Aorta (tissue), 5 donors: ENCODE measurements at regions of chr12 and their contacts with region 1.

Region 1: GRCh38 chr12:118103604-118104382 is at the start of gene VSIG10:
- DNase-seq: peak; percentile 79 to 88
- ATAC-seq: peak; percentile 94
- H3K4me3 ChIP-seq: peak within 1 kb of the TSS; percentile 70 to 80
- H3K27ac ChIP-seq: peak within 1 kb of the TSS in 1 of 2 donors; percentile 52
- H3K4me1 ChIP-seq: no peaks in the 10 kb centered on the region
- H3K27me3 ChIP-seq: no peaks in the 10 kb centered on the region
- total RNA-seq, gene VSIG10: 10.5 to 20.6 TPM

Region 2: DNA sequence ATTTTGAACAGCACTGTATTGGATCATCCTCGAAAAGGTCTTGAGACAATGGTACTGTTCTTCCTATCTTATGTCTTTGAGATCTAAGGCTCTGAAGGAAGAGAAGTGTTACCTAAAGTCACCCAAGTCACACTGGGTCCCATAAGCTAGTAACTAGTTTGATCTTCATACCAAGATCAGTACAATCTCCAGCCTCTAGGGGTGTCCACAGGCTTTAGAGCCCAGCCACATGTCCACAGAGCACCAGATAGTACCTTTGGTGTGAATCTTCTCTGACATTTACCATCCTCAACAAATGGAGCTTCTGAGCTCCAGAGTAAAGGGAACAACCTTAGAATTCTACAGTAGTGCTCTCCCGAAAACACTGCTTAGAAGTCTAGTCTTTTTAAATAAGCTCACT is 213.7 kb before region 1 on chr12:
- intact Hi-C with region 1: no loop called
- DNase-seq: no peak
- ATAC-seq: no peak
- H3K4me3 ChIP-seq: no peak overlapping the region
- H3K27ac ChIP-seq: no peak overlapping the region
- H3K4me1 ChIP-seq: no peaks in the 10 kb centered on the region
- H3K27me3 ChIP-seq: no peaks in the 10 kb centered on the region

Region 3: DNA sequence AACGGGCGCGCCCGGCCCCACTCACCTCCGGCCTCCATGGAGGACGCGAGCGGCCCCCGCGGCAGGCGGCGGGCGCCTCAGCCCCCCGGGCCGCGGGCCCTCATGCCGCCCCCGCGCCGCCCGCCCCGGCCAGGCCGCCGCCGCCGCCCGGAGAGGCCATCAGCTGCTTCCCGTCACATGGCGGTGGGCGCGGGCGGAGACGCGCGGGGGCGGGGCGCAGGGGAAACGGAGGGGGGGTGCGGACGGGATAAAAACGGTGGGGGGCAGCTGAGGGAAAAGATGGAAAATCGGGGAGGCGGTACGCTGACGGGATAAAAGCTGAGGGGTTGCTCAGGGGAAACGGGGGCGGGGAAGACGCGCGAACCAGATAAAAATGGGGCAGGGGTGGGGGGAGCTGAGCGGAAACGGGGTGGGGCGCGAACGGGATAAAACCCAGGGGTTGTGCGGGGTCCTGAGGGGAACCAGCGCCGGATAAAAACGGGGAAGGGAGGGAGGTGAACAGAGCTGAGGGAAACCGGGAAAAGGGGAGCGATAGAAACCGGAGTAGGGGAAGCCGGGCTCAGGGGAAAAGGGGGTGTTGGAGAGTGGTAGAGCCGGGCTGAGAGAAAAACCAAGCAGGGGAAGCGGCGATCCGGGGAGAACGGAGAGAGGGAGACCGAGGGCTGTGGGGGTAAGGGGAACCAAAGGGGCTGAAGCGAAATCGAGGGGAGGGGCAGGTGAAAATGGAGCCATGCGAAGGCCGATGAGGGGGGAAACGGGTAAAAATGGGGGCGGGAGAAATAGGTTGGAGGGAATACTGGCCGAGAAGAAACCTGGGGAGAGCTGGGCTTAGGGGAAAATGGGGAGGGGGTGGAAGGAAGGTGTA is 42.5 kb before region 1 on chr12 and contains the start of gene WSB2:
- intact Hi-C with region 1: loop called (anchors 5 kb)
- DNase-seq: peak; percentile 86 to 95
- ATAC-seq: peak; percentile 82
- H3K4me3 ChIP-seq: peak within 1 kb of the TSS; percentile 99 to 100
- H3K27ac ChIP-seq: peak within 1 kb of the TSS; percentile 97 to 100
- H3K4me1 ChIP-seq: no peaks in the 10 kb centered on the region
- H3K27me3 ChIP-seq: no peaks in the 10 kb centered on the region
- total RNA-seq, gene WSB2: 61.2 to 97.3 TPM

Region 4: GRCh38 chr12:118135788-118136558 is 32.2 kb after region 1 on chr12 and contains the start of gene PEBP1:
- intact Hi-C with region 1: no loop called
- DNase-seq: peak; percentile 97 to 99
- ATAC-seq: peak; percentile 99
- H3K4me3 ChIP-seq: peak within 1 kb of the TSS; percentile 72 to 77
- H3K27ac ChIP-seq: peak within 1 kb of the TSS in 1 of 2 donors; percentile 60
- H3K4me1 ChIP-seq: no peaks in the 10 kb centered on the region
- H3K27me3 ChIP-seq: no peaks in the 10 kb centered on the region
- total RNA-seq, gene PEBP1: 122 to 155 TPM